ENCODE measurements at regions of chr6 and their contacts with region 1.

Region 1: DNA sequence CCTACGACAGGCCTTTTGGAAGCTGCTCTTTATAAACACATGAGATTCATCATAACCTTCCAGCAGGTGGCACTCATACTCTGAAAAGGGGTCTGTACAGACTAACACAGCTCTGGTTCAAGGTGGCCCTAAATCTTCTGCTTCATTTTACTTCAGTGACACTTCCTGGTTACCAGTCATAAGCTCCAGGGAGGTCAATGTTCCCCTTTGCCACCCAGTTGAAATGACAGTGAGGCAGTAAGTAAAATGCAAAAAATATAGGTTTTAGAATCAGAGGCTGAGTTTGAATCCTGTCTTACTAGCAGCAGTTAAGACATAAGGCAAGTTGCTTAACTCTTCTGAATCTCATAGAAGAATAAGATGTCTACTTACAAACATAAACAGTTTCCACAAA is 132.8 kb downstream of the CDK19 start:
- DNase-seq: no peak
- ATAC-seq: peak; percentile 99
- H3K4me3 Mint-ChIP-seq: no peak overlapping the region
- H3K27ac Mint-ChIP-seq: no peak overlapping the region
- H3K4me1 Mint-ChIP-seq: peaks cover 13% of the 10 kb centered on the region
- H3K27me3 Mint-ChIP-seq: no peaks in the 10 kb centered on the region
- CTCF ChIP-seq: no peak

Region 2: DNA sequence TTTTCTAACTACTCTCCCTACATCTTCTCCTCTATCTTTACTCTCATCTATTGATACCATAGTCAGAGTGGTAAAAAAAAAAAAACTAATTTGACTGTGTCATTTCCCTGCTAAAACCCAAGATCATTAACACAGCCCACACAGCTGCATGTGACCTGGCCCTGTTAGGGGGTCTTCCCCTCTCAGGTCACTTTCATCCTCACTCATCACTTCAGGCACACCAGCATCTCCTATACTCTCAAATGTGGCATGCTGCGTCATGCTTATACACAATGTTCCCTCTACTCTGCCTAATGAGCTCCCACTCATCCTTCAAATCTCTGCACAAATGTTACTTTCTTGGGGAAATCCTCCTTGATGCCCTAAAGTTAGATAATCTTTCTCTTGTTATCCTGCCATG is 46.0 kb after region 1 on chr6:
- CTCF ChIA-PET with region 1: no interaction called
- POLR2A ChIA-PET with region 1: no interaction called
- intact Hi-C with region 1: no loop called
- DNase-seq: no peak
- ATAC-seq: no peak
- H3K4me3 Mint-ChIP-seq: no peak overlapping the region
- H3K27ac Mint-ChIP-seq: no peak overlapping the region
- H3K4me1 Mint-ChIP-seq: peaks cover 3% of the 10 kb centered on the region
- H3K27me3 Mint-ChIP-seq: no peaks in the 10 kb centered on the region
- CTCF ChIP-seq: no peak

Region 3: GRCh38 chr6:110882271-110882613 is 199.8 kb after region 1 on chr6:
- CTCF ChIA-PET with region 1: interaction called, 74 read pairs
- POLR2A ChIA-PET with region 1: interaction called, 9 read pairs
- intact Hi-C with region 1: loop called (anchors 1 kb)
- DNase-seq: no peak
- ATAC-seq: no peak
- H3K4me3 Mint-ChIP-seq: no peak overlapping the region
- H3K27ac Mint-ChIP-seq: no peak overlapping the region
- H3K4me1 Mint-ChIP-seq: peaks cover 98% of the 10 kb centered on the region
- H3K27me3 Mint-ChIP-seq: no peaks in the 10 kb centered on the region
- CTCF ChIP-seq: no peak

Region 4: GRCh38 chr6:110949679-110950285 is 267.3 kb after region 1 on chr6:
- CTCF ChIA-PET with region 1: interaction called, 77 read pairs
- POLR2A ChIA-PET with region 1: interaction called, 5 read pairs
- intact Hi-C with region 1: loop called (anchors 1 kb)
- DNase-seq: no peak
- ATAC-seq: no peak
- H3K4me3 Mint-ChIP-seq: no peak overlapping the region
- H3K27ac Mint-ChIP-seq: no peak overlapping the region
- H3K4me1 Mint-ChIP-seq: peaks cover 1% of the 10 kb centered on the region
- H3K27me3 Mint-ChIP-seq: no peaks in the 10 kb centered on the region
- CTCF ChIP-seq: no peak

Region 5: GRCh38 chr6:110981202-110981600 is 298.7 kb after region 1 on chr6:
- CTCF ChIA-PET with region 1: interaction called, 11 read pairs
- POLR2A ChIA-PET with region 1: interaction called, 3 read pairs
- intact Hi-C with region 1: loop called (anchors 1 kb)
- DNase-seq: no peak
- ATAC-seq: no peak
- H3K4me3 Mint-ChIP-seq: peak overlapping the region; percentile 95
- H3K27ac Mint-ChIP-seq: peak overlapping the region; percentile 98
- H3K4me1 Mint-ChIP-seq: peaks cover 37% of the 10 kb centered on the region
- H3K27me3 Mint-ChIP-seq: no peaks in the 10 kb centered on the region
- CTCF ChIP-seq: no peak

Region 6: GRCh38 chr6:111210194-111210728 is 527.8 kb after region 1 on chr6:
- CTCF ChIA-PET with region 1: no interaction called
- POLR2A ChIA-PET with region 1: no interaction called
- intact Hi-C with region 1: loop called (anchors 1 kb)
- DNase-seq: no peak
- ATAC-seq: peak; percentile 68
- H3K4me3 Mint-ChIP-seq: no peak overlapping the region
- H3K27ac Mint-ChIP-seq: no peak overlapping the region
- H3K4me1 Mint-ChIP-seq: no peaks in the 10 kb centered on the region
- H3K27me3 Mint-ChIP-seq: no peaks in the 10 kb centered on the region
- CTCF ChIP-seq: no peak